Posterior vena cava (tissue), 2 donors: ENCODE measurements at regions of chr11 and their contacts with region 1.

Region 1: GRCh38 chr11:81165164-81165563 is 1568.5 kb downstream of the FAM181B start:
- DNase-seq: no peak

Region 2: DNA sequence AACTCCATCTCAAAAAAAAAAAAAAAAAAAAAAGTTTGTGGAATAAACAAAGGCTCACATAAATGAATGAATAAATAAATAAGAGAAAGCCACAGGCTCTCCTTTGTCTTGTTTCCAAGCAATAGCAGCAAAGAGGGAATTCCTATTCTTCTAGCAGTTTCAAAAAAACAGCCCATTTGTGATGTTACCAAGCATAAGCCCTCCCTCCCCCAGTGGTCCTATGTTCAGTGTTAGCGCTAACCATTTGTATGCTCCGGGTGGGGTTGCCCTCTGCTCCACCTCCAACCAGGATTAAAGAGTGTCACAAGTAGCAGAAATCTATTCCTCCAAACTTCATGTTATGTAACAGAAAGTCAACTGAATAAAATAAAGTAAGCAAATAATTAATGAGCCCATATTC is 509.3 kb before region 1 on chr11:
- intact Hi-C with region 1: no loop called
- DNase-seq: no peak

Region 3: GRCh38 chr11:81104051-81104450 is 61.1 kb before region 1 on chr11:
- intact Hi-C with region 1: loop called in 1 of 2 experiments (anchors 10 kb)
- DNase-seq: no peak

Region 4: GRCh38 chr11:81220146-81220895 is 55.2 kb after region 1 on chr11:
- intact Hi-C with region 1: no loop called
- DNase-seq: no peak